GM13977 (cell line): ENCODE measurements at regions of chr4 and their contacts with region 1.

Region 1: GRCh38 chr4:128809477-128810330 is at the start of gene JADE1:
- DNase-seq: peak; percentile 89
- CTCF ChIP-seq: peak; percentile 79

Region 2: GRCh38 chr4:128006592-128006991 is 803.1 kb before region 1 on chr4:
- in situ Hi-C with region 1: no loop called
- DNase-seq: no peak
- CTCF ChIP-seq: no peak

Region 3: GRCh38 chr4:128191115-128191781 is 618.5 kb before region 1 on chr4:
- in situ Hi-C with region 1: loop called (anchors 25 kb)
- DNase-seq: peak; percentile 61
- CTCF ChIP-seq: peak; percentile 85

Region 4: DNA sequence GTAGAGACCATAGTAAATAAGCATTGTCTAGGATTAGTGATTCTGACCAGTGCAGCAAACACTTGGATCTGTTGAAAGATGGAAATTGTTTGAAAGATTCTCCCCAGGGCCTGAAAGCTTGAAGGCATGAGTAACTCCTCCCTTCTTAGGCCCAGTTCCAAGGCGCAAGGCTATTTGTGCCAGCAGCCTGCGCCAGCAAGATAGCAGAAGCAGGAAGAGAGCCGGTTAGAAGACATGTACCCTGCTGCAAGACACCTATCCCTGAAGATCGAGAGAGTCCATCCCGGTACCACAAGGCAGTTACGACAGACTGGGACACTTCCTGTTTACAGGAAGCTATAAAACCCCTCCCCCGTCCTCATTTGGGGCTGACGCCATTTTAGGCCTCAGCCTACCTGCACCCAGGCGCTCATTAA is 72.6 kb before region 1 on chr4:
- in situ Hi-C with region 1: no loop called
- DNase-seq: no peak
- CTCF ChIP-seq: no peak

Region 5: GRCh38 chr4:128863312-128864075 is 53.8 kb after region 1 on chr4:
- in situ Hi-C with region 1: loop called (anchors 10 kb)
- DNase-seq: peak; percentile 43
- CTCF ChIP-seq: peak; percentile 81